MCF 10A (cell line): ENCODE measurements at regions of chr5 and their contacts with region 1.

Region 1: DNA sequence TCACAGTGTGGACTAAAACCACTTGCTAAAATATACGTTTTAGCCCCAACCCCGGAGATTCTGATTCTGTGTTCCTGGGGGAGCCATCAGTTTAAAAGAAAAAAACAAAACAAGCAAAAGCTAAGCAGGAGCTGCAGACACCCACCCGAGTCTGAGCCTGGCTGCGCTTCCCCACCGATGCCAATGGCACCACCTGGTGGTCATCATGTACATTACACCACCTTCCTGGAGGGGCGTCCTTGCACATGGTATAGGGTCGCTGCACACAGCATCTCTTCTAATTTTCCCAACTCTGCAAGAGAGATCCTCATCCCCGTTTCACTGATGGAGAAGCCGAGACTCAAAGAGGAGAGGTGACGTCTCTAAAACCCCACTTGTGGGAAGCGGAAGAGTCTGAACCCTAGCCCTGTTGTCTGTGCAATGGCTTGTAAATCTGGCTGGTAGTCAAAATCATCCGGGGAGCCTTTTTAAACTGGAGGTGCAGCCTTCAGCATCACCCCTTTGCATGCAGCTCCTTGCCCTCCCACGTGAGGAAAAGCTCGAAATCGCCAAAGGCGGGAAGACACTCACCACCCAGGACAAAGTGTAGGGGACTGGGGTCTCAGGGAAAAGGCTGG is 23.1 kb upstream of the CNOT6 start:
- DNase-seq: peak; percentile 72
- H3K4me3 Mint-ChIP-seq: no peak overlapping the region
- H3K27ac Mint-ChIP-seq: no peak overlapping the region
- H3K4me1 Mint-ChIP-seq: peaks cover 18% of the 10 kb centered on the region
- H3K27me3 Mint-ChIP-seq: no peaks in the 10 kb centered on the region
- CTCF ChIP-seq: peak; percentile 100

Region 2: GRCh38 chr5:180304431-180305375 is 166.4 kb before region 1 on chr5:
- CTCF ChIA-PET with region 1: interaction called, 10 read pairs
- POLR2A ChIA-PET with region 1: interaction called, 4 read pairs
- intact Hi-C with region 1: no loop called
- DNase-seq: no peak
- H3K4me3 Mint-ChIP-seq: no peak overlapping the region
- H3K27ac Mint-ChIP-seq: no peak overlapping the region
- H3K4me1 Mint-ChIP-seq: no peaks in the 10 kb centered on the region
- H3K27me3 Mint-ChIP-seq: peaks cover 12% of the 10 kb centered on the region
- CTCF ChIP-seq: no peak

Region 3: DNA sequence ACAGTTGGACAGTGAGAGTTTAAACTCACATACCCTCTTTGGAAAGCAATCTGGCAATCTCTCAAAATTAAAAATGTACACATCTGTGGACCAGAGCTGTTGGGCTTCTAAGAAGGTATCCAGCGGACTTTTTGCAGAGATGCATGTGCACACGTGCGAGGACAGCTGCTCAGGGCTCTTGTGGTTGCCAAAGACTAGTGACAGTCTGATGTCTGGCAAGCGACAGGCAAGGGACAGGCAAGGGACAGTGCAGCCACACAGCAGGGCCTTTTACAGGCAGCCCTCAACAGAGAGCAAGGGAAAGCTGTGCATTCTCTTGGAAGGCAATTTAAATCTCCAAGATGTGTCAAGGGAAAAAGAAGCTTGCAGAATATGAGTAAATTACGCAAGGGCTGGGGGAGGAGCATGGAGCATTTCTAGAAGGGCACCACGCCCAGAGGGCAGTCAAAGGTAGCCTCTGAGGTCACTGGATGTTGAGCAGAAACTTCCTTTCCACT is 127.2 kb before region 1 on chr5:
- CTCF ChIA-PET with region 1: interaction called, 24 read pairs
- POLR2A ChIA-PET with region 1: interaction called, 4 read pairs
- intact Hi-C with region 1: no loop called
- DNase-seq: peak; percentile 92
- H3K4me3 Mint-ChIP-seq: no peak overlapping the region
- H3K27ac Mint-ChIP-seq: no peak overlapping the region
- H3K4me1 Mint-ChIP-seq: peaks cover 8% of the 10 kb centered on the region
- H3K27me3 Mint-ChIP-seq: no peaks in the 10 kb centered on the region
- CTCF ChIP-seq: no peak

Region 4: DNA sequence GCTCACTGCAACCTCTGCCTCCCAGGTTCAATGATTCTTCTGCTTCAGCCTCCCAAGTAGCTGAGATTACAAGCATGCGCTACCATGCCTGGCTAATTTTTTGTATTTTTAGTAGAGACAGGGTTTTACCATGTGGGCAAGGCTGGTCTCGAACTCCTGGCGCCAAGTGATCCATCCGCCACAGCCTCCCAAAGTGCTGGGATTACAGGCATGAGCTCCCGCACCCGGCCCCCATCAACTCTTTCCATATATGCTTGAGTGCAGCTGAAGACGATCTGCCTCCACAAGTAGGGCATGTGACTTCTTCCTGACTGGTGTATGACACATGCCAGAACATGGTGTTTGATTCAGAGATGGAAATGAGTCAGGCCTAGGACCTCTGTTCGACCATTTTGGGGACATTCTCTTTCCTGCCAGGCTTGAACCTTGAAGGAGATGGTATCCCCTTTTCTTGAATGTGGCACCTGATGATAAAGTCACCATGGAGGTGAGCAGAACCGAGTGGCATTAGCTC is 15.6 kb after region 1 on chr5:
- CTCF ChIA-PET with region 1: interaction called, 28 read pairs
- POLR2A ChIA-PET with region 1: interaction called, 4 read pairs
- intact Hi-C with region 1: no loop called
- DNase-seq: no peak
- H3K4me3 Mint-ChIP-seq: no peak overlapping the region
- H3K27ac Mint-ChIP-seq: no peak overlapping the region
- H3K4me1 Mint-ChIP-seq: peaks cover 7% of the 10 kb centered on the region
- H3K27me3 Mint-ChIP-seq: no peaks in the 10 kb centered on the region
- CTCF ChIP-seq: no peak

Region 5: GRCh38 chr5:180605554-180606214 is 134.6 kb after region 1 on chr5:
- CTCF ChIA-PET with region 1: interaction called, 8 read pairs
- POLR2A ChIA-PET with region 1: no interaction called
- intact Hi-C with region 1: loop called (anchors 5 kb)
- DNase-seq: peak; percentile 85
- H3K4me3 Mint-ChIP-seq: no peak overlapping the region
- H3K27ac Mint-ChIP-seq: no peak overlapping the region
- H3K4me1 Mint-ChIP-seq: peaks cover 17% of the 10 kb centered on the region
- H3K27me3 Mint-ChIP-seq: peaks cover 16% of the 10 kb centered on the region
- CTCF ChIP-seq: peak; percentile 95